ENCODE measurements at regions of chr15 and their contacts with region 1.

Region 1: DNA sequence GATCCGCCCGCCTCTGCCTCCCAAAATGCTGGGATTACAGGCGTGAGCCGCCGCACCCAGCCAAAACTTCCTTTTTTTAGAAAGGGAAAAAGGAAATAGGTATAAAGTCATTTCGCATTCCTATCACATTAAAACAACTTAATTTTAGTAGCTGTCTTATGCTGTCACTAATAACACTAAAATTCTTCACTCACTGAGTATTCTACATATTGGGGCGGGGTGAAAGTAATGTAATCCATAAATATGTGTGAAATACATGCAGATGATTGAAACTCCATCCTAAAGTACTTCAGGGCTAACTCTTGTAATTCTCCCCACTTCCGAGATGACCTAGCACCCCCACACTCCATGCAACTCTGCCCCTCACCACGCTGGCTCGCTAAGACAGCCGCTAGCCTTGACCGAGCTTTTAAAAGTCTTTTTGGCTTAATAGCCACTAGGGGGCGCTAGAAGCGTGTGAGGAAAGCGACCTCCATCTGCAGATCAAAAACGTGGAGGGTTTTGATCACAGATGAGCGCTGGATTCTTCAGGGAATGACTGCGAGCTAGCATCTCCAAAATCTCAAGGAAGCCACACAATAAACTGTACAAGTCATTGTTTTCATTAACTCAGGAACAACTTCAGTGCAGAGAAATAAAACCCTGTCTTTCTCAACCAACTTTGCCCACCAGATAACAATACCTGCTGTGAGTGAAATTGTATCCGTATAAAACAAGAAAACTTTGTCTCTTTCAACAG is 129.3 kb upstream of the IGF1R start:
- DNase-seq: peak; percentile 32
- H3K4me3 ChIP-seq: no peak overlapping the region
- H3K27ac ChIP-seq: no peak overlapping the region
- H3K4me1 ChIP-seq: no peaks in the 10 kb centered on the region
- H3K27me3 ChIP-seq: no peaks in the 10 kb centered on the region
- CTCF ChIP-seq: peak; percentile 63 to 79 (median 74)
- EP300 ChIP-seq: no peak
- POLR2A ChIP-seq: no peak

Region 2: DNA sequence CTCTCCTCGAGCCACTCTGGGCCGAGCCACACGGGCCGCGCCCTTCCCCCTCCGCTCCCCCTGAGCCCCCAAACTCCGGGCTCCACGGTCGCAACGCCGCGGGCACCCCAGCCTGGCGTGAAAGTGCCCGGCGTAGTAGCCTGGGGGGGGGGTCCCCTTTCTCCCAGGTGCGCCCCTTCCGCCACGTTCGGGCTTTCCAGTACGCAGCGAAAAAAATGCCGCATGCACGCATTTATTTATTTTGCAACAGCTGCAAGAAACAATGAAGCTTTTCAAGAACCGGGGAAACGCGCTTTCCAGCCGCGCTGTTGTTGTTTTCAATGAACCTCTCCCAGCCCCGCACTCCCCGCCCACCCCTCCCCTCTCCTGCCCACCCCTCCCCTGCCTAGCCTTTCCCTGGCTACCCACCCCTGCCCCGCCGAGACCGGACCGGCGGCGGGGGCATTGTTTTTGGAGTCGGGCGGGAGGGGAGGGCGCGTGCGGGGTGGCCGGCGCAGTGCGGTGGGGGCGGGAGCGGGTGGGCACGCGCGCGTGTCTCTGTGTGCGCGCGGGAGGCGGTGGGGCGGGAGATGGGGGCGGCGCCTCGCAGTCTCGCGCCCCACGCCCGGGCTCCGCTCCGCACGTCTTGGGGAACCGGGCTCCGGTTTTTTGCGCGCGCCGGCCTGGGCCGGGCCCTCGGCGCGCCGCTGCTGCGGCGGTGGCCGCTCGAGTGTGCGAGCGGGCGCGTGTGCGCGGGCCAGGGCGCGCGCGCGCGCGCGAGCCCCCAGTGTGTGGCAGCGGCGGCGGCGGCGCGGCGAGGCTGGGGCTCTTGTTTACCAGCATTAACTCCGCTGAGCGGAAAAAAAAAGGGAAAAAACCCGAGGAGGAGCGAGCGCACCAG is 129.0 kb after region 1 on chr15 and contains the start of gene IGF1R:
- in situ Hi-C with region 1: loop called in 2 of 4 experiments (anchors 10 kb)
- intact Hi-C with region 1: no loop called
- DNase-seq: peak; percentile 88
- H3K4me3 ChIP-seq: peak within 1 kb of the TSS; percentile 62 to 90 (median 80)
- H3K27ac ChIP-seq: peak within 1 kb of the TSS; percentile 95 to 98 (median 96)
- H3K4me1 ChIP-seq: peaks cover 7 to 28% (median 12%) of the 10 kb centered on the region in 4 donors
- H3K27me3 ChIP-seq: peaks cover 15% of the 10 kb centered on the region
- CTCF ChIP-seq: peak in 2 of 5 experiments; percentile 42
- EP300 ChIP-seq: no peak
- POLR2A ChIP-seq: no peak
- total RNA-seq, gene IGF1R: 49.4 to 239 (median 109) TPM

Region 3: DNA sequence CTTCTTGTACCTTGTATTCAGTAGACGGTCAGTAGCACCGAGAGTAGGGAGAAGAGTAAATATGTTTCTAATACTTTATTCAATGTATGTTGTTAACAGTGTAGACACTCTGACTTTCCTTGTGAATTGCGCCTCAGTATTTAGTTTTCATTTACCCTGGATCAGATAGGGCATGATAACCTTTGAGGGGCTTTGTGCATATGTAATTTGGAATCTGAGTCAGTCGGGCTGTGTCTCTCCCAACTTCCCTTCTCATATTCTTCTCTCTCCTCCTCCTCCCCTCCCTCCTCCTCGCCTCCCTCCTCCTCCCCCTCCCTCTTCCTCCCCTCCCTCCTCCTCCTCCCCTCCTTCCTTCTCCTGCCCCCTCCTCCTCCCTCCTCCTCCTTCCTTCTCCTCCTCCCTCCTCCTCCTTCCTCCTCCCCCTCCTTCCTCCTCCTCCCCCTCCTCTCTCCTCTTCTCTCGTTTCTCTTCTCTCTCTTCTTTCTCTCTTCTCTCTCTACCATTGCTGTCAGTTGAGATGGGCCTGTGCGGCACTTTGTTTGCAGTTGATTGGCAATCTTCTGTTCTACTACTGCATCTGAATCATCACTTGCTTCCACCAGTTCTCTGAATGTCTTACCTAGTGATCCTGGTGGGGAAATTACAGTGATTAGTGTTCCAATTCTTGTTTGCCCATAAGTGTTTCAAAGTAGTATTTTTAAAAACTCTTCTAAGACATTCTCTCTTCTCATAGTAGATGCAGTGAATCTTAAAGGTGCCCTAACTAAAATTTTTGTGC is 326.3 kb after region 1 on chr15:
- in situ Hi-C with region 1: loop called in 1 of 4 experiments (anchors 25 kb)
- intact Hi-C with region 1: no loop called
- DNase-seq: no peak
- H3K4me3 ChIP-seq: no peak overlapping the region
- H3K27ac ChIP-seq: no peak overlapping the region
- H3K4me1 ChIP-seq: peaks cover 4 to 22% (median 18%) of the 10 kb centered on the region in 4 donors
- H3K27me3 ChIP-seq: no peaks in the 10 kb centered on the region
- CTCF ChIP-seq: no peak
- EP300 ChIP-seq: no peak
- POLR2A ChIP-seq: no peak

Region 4: DNA sequence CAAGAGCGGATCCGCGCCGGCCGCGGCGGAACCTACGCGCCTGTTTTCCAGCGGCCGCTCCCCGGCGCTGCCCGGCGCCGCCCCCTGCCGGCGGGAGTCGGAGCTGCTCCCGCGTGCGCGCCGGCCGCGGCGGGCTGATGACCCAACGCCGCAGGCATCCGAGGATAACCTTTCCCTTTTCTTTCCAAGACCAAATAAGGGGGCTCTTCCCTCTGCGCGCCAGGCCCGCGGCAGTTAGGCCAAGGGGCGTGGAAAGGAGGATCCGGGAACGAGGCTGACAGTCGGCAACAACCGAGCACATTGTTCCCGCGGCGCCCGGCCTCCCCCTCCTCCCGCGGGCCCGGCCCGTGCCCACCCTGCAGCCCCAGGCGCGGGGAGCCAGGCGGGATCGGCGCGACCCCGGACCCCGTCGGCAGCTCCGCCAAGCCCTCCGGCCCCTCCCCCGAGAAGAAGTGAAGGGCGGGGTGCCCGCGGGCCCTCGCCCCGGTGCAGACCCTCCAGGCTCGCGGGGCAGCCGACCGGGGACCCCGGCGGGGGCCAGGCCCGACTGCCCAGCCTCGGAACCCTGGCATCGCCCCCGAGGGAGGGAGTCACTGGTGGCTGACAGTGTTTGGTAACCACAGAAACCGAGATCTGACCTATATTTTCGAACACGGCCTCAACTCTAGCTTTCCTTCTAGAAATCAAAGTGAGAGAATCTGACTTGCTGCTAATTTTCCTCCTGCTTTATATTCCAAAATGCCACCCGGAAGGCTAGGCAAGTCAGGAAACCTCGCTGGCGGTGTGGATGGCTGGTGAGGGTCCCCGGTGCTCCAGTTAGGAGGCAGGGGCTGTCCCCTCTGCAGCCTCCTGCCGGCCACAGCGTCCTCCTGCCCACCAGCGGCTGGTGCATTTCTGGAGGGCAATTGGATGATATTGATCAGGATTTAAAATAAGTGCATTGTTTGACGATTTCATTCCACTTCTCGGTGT is 540.3 kb after region 1 on chr15:
- in situ Hi-C with region 1: loop called in 2 of 4 experiments (anchors 25 kb)
- intact Hi-C with region 1: no loop called
- DNase-seq: peak; percentile 71
- H3K4me3 ChIP-seq: peak overlapping the region; percentile 26 to 50 (median 46)
- H3K27ac ChIP-seq: peak overlapping the region; percentile 88 to 92 (median 90)
- H3K4me1 ChIP-seq: peaks cover 4 to 14% (median 10%) of the 10 kb centered on the region in 4 donors
- H3K27me3 ChIP-seq: peaks cover 41% of the 10 kb centered on the region
- CTCF ChIP-seq: peak in 4 of 5 experiments; percentile 48 to 74 (median 64)
- EP300 ChIP-seq: no peak
- POLR2A ChIP-seq: no peak